Posterior cingulate gyrus (tissue), 11 donors: ENCODE measurements at regions of chr15 and their contacts with region 1.

Region 1: GRCh38 chr15:27059610-27060202 is 88.7 kb downstream of the GABRG3 start:
- DNase-seq: peak in 2 of 10 donors; percentile 41 to 57

Region 2: GRCh38 chr15:27358751-27359434 is 299.2 kb after region 1 on chr15:
- intact Hi-C with region 1: loop called (anchors 1 kb)
- DNase-seq: peak; percentile 22 to 95 (median 69)